ENCODE measurements at regions of chr1 and their contacts with region 1.

Region 1: GRCh38 chr1:117605774-117606648 is at the start of gene TENT5C:
- DNase-seq: peak; percentile 98
- ATAC-seq: peak; percentile 96
- H3K4me3 Mint-ChIP-seq: peak within 1 kb of the TSS; percentile 92
- H3K27ac Mint-ChIP-seq: peak within 1 kb of the TSS; percentile 86
- H3K4me1 Mint-ChIP-seq: peaks cover 37% of the 10 kb centered on the region
- H3K27me3 Mint-ChIP-seq: peaks cover 2% of the 10 kb centered on the region
- total RNA-seq, gene TENT5C: 6.0 to 6.4 TPM

Region 2: GRCh38 chr1:116754198-116754977 is 851.6 kb before region 1 on chr1 and contains the start of gene CD2:
- CTCF ChIA-PET with region 1: no interaction called
- POLR2A ChIA-PET with region 1: no interaction called
- intact Hi-C with region 1: loop called in 1 of 2 experiments (anchors 10 kb)
- DNase-seq: peak; percentile 80
- ATAC-seq: peak; percentile 80
- H3K4me3 Mint-ChIP-seq: peak within 1 kb of the TSS; percentile 93
- H3K27ac Mint-ChIP-seq: peak within 1 kb of the TSS; percentile 100
- H3K4me1 Mint-ChIP-seq: peaks cover 41% of the 10 kb centered on the region
- H3K27me3 Mint-ChIP-seq: no peaks in the 10 kb centered on the region
- total RNA-seq, gene CD2: 287 to 291 TPM

Region 3: DNA sequence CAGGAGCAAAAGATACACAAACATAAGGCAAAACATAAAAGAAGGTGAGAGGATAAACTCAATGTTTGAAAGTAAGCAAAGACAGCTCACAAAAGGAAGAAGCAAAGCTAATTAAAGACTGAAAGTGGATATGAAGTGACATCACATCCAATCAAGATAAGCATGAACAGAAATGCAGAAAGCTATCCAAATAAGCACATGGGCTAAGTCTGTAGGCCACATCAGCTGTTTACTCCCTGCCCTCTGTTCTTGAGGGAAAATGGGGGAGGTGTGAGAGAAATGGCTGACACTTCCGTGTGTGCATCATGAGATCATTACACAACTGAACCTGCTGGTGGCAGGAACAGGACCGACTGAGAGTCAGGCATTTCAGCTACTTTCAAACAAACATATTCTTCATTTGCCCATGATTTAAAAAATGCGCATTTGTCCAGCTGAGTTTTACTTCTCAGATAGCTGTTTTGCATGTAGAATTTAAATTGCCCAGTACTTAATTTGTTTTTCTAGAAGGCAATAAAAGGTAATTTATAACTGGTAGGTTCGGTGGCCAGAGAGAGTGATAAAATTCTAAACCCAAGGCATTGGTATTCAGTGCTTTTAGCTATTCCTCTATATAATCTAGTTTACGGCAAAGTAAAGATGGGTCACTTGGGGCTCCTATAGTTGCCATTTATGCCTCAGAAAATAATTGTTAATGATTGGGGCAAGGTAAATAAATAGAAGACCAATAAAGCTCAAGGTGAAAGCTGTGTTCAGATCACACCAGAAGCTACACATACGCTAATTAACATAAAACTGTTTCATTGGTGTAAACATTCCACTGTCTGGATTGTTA is 265.9 kb before region 1 on chr1:
- CTCF ChIA-PET with region 1: no interaction called
- POLR2A ChIA-PET with region 1: no interaction called
- intact Hi-C with region 1: no loop called
- DNase-seq: peak; percentile 34
- ATAC-seq: peak; percentile 74
- H3K4me3 Mint-ChIP-seq: no peak overlapping the region
- H3K27ac Mint-ChIP-seq: no peak overlapping the region
- H3K4me1 Mint-ChIP-seq: peaks cover 16% of the 10 kb centered on the region
- H3K27me3 Mint-ChIP-seq: no peaks in the 10 kb centered on the region

Region 4: DNA sequence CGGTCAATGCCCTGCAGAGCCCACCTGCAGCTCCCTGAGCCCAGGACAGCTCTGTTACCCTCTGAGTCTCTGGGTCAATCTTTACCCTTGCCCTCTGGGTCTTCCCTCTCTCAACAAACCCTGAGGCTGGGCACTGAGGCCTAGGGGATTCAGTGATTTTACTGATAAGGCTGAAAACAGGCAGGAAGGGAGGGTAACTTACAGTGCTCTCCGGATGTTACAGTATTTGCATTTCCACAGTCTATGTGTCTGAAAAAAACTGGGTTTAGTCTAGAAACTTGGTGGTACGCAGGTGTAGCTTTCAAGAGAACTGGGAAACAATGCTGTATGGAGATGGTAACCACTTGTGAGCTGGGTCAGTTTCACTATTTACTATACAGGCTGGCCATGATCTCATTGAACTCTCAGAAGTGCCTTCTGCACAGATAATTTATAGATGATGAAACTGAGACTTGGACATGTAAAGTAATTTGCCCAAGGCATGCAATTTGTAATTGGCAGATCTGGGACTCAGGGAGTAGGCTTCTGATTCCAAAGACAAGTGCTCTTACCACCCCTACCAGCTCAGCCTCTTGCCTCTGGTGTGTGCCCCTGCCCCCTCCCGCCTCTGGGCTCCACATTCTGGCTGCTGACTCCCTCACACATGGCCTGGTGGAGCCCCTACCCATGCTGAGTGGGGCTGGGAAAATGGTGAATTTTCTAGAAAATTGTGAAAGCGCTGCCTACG is 48.6 kb after region 1 on chr1:
- CTCF ChIA-PET with region 1: interaction called, 7 read pairs
- POLR2A ChIA-PET with region 1: interaction called, 21 read pairs
- intact Hi-C with region 1: loop called in 1 of 2 experiments (anchors 1 kb)
- DNase-seq: no peak
- ATAC-seq: peak; percentile 34
- H3K4me3 Mint-ChIP-seq: peak overlapping the region; percentile 16
- H3K27ac Mint-ChIP-seq: peak overlapping the region; percentile 79
- H3K4me1 Mint-ChIP-seq: peaks cover 78% of the 10 kb centered on the region
- H3K27me3 Mint-ChIP-seq: peaks cover 18% of the 10 kb centered on the region

Region 5: DNA sequence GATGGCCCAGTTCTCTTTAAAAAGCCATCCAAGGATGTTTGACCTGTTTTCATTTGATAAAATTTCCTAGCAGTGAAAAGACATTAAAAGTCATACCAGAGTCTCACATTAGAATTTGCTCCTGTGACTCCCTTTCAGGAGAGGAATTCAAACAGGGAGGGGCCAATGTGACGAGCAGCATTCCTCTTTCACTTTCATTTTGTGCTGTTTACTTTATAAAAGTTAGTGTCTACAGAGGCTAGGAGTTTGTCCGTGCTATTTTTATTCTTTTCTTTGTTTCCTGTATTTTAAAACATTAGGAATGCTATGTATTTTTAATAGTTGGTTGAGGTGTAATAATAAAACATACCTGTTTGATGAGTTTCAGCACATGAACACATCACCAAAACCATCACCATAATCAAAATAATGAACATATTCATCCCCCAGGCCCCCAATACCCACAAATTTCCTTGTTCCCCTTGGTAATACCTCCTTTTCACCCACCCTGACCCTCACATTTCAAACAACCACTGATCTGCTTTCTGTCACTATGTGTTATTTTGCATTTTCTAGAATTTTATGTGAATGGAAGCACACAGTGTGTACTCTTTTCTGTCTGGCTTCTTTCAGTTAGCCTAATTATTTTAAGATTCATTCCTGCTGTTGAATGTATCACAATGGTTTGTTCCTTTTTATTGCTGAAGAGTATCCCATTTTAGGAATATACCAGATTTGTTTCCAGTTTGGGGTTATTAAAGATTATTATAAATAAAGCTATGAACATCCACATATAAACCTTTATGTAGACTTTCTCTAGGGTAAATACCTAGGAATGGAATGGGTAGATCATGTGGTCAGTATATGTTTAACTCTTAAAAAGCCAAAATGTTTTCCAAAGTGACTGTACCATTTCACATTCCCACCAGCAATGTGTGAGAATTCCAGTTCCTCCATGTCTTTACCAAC is 129.3 kb after region 1 on chr1:
- CTCF ChIA-PET with region 1: no interaction called
- POLR2A ChIA-PET with region 1: no interaction called
- intact Hi-C with region 1: loop called in 1 of 2 experiments (anchors 1 kb)
- DNase-seq: peak; percentile 51
- ATAC-seq: peak; percentile 74
- H3K4me3 Mint-ChIP-seq: peak overlapping the region; percentile 54
- H3K27ac Mint-ChIP-seq: peak overlapping the region; percentile 93
- H3K4me1 Mint-ChIP-seq: peaks cover 4% of the 10 kb centered on the region
- H3K27me3 Mint-ChIP-seq: no peaks in the 10 kb centered on the region

Region 6: GRCh38 chr1:119140177-119141019 is 1534.4 kb after region 1 on chr1 and contains the start of gene WARS2:
- CTCF ChIA-PET with region 1: no interaction called
- POLR2A ChIA-PET with region 1: no interaction called
- intact Hi-C with region 1: loop called in 1 of 2 experiments (anchors 2 kb)
- DNase-seq: peak; percentile 94
- ATAC-seq: peak; percentile 95
- H3K4me3 Mint-ChIP-seq: no peak within 1 kb of the TSS
- H3K27ac Mint-ChIP-seq: no peak within 1 kb of the TSS
- H3K4me1 Mint-ChIP-seq: peaks cover 13% of the 10 kb centered on the region
- H3K27me3 Mint-ChIP-seq: no peaks in the 10 kb centered on the region
- total RNA-seq, gene WARS2: 16.0 to 25.2 TPM